ENCODE measurements at regions of chr3 and their contacts with region 1.

Region 1: GRCh38 chr3:157201648-157202278 is 41.8 kb upstream of the CCNL1 start:
- DNase-seq: no peak
- H3K4me3 ChIP-seq: no peak overlapping the region
- H3K27ac ChIP-seq: no peak overlapping the region
- H3K4me1 ChIP-seq: no peaks in the 10 kb centered on the region
- H3K27me3 ChIP-seq: no peaks in the 10 kb centered on the region
- CTCF ChIP-seq: peak in 3 of 4 experiments; percentile 47 to 62 (median 59)
- POLR2A ChIP-seq: no peak

Region 2: DNA sequence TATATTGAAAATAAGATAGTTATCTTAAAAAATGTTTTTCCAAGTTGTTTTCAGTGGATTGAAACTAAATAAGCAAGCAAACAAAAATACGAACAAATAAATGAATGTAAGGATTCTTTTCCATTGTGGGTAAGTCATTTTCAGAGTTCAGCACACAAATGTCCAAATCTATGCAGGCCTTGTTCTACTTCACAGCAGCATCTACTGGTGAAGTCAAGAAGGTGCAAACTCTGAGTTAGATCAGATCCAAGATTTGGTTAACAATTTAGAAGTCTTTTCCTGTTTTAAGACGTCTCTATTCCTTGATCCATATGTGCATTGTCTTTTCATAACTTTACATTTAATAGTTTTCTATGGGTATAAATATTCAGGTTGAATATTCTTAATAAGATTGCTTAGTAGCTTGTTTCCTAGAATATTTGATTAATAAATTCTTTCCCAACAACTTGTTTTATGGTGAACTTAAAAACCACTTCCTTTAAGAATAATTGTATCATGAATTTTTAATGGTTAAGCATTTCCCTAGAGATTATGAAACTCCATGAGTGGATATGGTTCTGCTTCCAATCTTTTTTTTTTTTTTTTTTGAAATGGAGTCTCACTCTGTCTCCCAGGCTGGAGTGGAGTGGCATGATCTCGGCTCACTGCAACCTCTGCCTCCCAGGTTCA is 245.4 kb after region 1 on chr3:
- intact Hi-C with region 1: loop called (anchors 10 kb)
- DNase-seq: no peak
- H3K4me3 ChIP-seq: no peak overlapping the region
- H3K27ac ChIP-seq: no peak overlapping the region
- H3K4me1 ChIP-seq: no peaks in the 10 kb centered on the region
- H3K27me3 ChIP-seq: no peaks in the 10 kb centered on the region
- CTCF ChIP-seq: peak in 1 of 4 experiments; percentile 28
- POLR2A ChIP-seq: no peak

Region 3: GRCh38 chr3:157493627-157494550 is 292.1 kb after region 1 on chr3:
- intact Hi-C with region 1: loop called (anchors 5 kb)
- DNase-seq: no peak
- H3K4me3 ChIP-seq: no peak overlapping the region
- H3K27ac ChIP-seq: no peak overlapping the region
- H3K4me1 ChIP-seq: no peaks in the 10 kb centered on the region
- H3K27me3 ChIP-seq: no peaks in the 10 kb centered on the region
- CTCF ChIP-seq: peak; percentile 31 to 74 (median 68)
- POLR2A ChIP-seq: no peak

Region 4: DNA sequence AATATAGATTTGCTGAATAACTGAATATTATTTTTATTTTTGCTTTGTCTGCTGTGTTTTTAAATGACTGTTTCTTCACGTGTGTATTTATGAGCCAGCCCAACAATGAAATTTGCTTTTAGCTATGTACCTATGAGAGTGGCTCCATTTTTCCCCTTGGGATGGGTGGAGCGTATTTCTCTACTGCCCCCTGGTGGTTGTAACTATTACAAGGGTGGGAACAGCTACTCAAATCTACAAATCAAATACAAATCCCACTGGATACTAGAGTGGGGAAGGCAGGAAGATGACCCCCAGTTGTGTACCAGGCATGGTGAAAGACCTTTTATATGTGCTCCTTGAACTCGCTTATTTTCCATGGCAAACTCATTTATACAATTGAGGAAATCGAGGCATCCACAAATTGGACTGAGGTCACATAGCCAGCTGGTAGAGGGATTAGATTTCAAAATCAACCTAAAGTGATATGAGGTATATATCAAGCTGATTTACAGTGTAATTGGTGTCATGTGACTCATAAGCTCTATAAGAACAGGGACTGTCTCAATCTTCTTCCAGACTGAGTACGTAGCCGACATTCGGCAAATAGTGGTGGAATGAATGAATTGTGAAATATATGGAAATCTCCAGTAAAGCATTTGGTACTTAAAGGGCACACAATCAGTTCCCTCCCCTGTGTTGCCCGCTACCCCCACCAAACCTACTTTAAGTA is 371.0 kb after region 1 on chr3:
- intact Hi-C with region 1: loop called (anchors 10 kb)
- DNase-seq: peak; percentile 45
- H3K4me3 ChIP-seq: no peak overlapping the region
- H3K27ac ChIP-seq: no peak overlapping the region
- H3K4me1 ChIP-seq: no peaks in the 10 kb centered on the region
- H3K27me3 ChIP-seq: no peaks in the 10 kb centered on the region
- CTCF ChIP-seq: peak; percentile 44 to 81 (median 64)
- POLR2A ChIP-seq: no peak

Measured in prostate gland (tissue), 2 donors.